Activated CD8-positive, alpha-beta T cell treated with anti-CD3 and anti-CD28 coated beads for 36 hours (primary cell): ENCODE measurements at regions of chr1 and their contacts with region 1.

Region 1: GRCh38 chr1:206797534-206798383 is 25.5 kb upstream of the IL10 start:
- DNase-seq: peak; percentile 50
- ATAC-seq: no peak
- H3K4me3 Mint-ChIP-seq: no peak overlapping the region
- H3K27ac Mint-ChIP-seq: no peak overlapping the region
- H3K4me1 Mint-ChIP-seq: peaks cover 68% of the 10 kb centered on the region
- H3K27me3 Mint-ChIP-seq: no peaks in the 10 kb centered on the region
- CTCF ChIP-seq: peak; percentile 64

Region 2: GRCh38 chr1:206583707-206584648 is 213.8 kb before region 1 on chr1:
- CTCF ChIA-PET with region 1: no interaction called
- POLR2A ChIA-PET with region 1: no interaction called
- intact Hi-C with region 1: no loop called
- DNase-seq: peak; percentile 91
- ATAC-seq: peak; percentile 22
- H3K4me3 Mint-ChIP-seq: peak overlapping the region; percentile 76
- H3K27ac Mint-ChIP-seq: peak overlapping the region; percentile 100
- H3K4me1 Mint-ChIP-seq: peaks cover 88% of the 10 kb centered on the region
- H3K27me3 Mint-ChIP-seq: no peaks in the 10 kb centered on the region
- CTCF ChIP-seq: peak; percentile 96

Region 3: DNA sequence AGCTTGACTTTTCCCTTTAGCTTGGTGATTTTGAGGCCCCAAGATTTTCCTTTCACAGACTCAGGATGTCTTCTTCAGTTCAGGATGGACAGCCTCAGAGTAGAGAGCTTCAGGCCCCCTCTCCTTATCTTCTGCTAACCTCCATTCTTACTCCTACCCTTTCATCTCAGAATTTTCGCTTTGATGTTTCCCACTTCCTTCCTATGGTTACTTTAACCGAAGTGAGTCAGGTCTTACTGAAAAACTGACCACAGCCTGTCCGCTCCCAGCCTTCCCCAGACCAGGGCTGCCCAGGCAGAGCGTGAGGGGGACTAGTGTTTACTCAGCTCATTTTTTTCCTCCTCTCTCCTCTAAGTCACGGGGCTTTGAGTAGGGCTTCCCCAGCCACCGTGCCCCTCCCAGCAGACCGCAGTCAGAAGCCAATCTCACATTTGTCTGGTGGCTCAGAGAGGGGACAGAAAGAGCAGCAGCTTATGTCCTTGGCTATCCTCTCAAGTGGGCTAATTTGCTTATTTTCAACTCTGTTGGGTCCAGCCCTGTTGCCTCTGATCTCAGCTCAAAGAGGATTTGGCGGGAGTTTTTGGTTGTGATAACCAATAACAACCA is 31.4 kb before region 1 on chr1:
- CTCF ChIA-PET with region 1: interaction called, 46 read pairs
- POLR2A ChIA-PET with region 1: interaction called, 7 read pairs
- intact Hi-C with region 1: no loop called
- DNase-seq: peak; percentile 87
- ATAC-seq: peak; percentile 75
- H3K4me3 Mint-ChIP-seq: peak overlapping the region; percentile 47
- H3K27ac Mint-ChIP-seq: peak overlapping the region; percentile 65
- H3K4me1 Mint-ChIP-seq: peaks cover 65% of the 10 kb centered on the region
- H3K27me3 Mint-ChIP-seq: peaks cover 3% of the 10 kb centered on the region
- CTCF ChIP-seq: no peak